ENCODE measurements at regions of chr12 and their contacts with region 1.

Region 1: DNA sequence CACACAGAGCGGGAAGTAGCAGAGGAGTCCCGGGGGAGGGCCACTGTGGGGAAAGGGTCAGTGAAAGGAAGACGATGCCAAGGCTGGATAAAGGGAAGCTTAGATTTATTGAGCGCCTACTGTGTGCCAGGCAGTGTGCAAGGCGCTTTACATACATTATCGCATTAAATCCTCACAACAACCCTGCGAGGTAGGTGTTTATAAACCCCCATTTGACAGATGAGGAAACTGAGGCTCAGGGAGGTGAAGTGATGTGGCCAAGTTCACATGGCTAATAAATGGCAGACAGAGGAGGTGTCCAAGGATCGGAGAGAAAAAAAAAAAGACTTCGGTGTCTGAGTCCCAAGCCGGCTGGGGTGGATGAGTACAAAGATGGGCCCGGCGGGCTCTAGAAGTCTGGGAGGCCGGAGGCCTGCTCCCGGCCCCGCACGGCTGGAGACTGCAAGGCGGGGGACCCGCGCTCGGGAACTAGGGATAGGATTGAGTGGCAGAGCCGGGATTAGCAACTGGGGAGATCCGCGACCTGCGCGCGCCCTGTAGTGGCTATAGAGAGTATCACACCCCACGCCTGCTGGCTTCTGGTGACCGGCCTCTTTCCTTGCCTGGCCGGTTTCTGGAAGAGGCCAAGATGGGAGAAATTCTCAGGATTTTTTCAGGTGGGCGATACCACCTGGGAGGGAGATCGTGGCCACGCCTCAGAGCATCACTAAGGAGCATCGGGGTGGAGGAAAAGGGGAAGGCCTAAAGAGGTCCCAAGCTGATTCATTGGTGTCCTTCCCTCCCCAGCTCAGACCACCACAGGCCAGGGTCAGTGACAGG is 3.9 kb downstream of the DDN start:
- DNase-seq: peak; percentile 93
- ATAC-seq: peak; percentile 69
- H3K4me3 Mint-ChIP-seq: peak overlapping the region; percentile 46
- H3K27ac Mint-ChIP-seq: no peak overlapping the region
- H3K4me1 Mint-ChIP-seq: peaks cover 24% of the 10 kb centered on the region
- H3K27me3 Mint-ChIP-seq: peaks cover 76% of the 10 kb centered on the region
- CTCF ChIP-seq: peak; percentile 58

Region 2: DNA sequence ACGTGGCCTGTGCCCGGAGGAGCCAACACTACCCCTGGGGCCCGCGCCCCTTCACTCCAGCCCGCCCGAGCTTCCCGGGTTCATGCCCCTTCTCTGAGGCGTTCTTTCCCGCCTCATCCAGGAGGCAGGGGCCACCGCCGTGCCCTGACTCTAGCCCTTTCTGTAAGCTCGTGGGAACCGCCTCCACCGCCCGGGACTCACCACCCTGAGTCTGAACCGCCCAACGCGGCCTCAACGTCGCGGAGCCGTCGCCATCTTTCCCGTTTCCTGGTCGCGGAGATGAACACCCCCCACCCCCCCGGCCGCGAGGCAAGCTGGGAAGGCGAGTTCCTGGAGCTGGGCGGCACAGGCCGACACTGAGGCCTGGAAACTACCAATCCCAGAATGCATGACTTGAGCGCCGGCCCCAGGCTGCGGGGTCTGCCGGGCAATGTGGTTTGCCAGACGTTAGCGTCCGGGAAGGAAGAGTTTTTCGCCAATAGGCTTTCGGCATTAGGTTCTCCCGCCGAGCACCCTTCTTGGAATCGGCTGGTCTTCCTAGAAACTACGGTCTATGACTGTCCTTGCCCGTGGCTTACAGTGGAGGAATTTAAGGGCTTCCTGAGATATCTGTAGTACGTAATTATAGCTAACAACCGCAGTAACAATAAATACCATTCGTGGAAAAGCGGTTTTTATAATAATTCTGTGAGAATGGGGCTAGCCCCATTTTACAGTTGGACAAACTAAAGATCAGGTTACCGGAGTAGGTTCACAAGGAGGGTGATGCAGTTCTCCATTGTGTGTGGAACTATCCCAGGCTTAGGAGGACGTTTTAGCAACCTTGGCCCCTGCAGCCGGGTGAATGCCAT is 143.2 kb before region 1 on chr12 and contains the start of gene DDX23:
- CTCF ChIA-PET with region 1: interaction called, 19 read pairs
- POLR2A ChIA-PET with region 1: no interaction called
- DNase-seq: peak; percentile 93
- ATAC-seq: peak; percentile 99
- H3K4me3 Mint-ChIP-seq: peak within 1 kb of the TSS; percentile 94
- H3K27ac Mint-ChIP-seq: peak within 1 kb of the TSS; percentile 95
- H3K4me1 Mint-ChIP-seq: peaks cover 20% of the 10 kb centered on the region
- H3K27me3 Mint-ChIP-seq: no peaks in the 10 kb centered on the region
- CTCF ChIP-seq: no peak
- total RNA-seq, gene DDX23: 91.1 to 107 TPM (median 93.4 TPM) in 3 replicates

Region 3: DNA sequence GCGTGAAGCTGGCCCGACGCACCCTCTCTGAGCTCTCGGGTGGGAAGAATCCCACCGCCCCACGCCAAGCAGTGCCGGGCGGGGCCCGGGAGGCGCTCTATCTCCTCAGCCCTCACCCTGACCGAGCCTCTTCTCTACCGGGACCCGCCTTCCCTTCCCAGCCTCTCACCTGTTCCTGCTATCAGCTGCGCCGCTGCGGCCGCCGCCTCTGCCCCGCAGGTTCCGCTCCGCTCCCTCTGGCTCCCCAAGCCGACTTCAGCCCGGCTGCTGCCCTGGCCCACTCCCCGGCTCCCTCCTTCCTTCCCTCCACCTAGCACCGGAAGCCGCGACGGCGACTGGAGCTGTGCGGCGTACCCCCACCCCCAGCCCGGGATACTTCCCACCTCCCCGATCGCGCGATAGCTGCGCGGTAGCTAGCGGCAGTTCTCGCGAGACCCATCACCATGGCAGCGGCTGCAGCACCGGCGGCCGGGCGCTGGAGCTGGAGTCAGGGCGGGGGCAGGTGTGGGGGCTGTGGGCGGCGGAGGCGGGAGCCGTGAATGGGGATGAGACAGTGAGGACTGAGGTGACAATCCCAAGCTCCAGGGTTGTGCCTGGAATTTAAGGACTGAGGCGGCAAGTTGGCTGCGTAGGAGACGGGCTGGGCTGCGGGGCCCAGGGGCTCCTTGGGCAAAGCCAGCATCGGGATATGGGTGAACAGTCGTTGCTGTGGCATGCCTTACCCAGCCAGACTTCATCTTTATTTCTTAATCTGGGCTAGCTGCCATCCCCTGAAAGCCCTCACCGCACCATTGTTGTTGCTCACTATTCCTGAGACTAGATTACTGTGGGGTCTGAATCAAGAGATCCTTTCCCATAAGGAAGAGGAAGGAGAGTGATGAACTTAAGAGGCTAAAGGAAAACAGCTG is 37.9 kb before region 1 on chr12 and contains the start of gene ARF3:
- CTCF ChIA-PET with region 1: interaction called, 21 read pairs
- POLR2A ChIA-PET with region 1: interaction called, 5 read pairs
- DNase-seq: peak; percentile 98
- ATAC-seq: peak; percentile 89
- H3K4me3 Mint-ChIP-seq: peak within 1 kb of the TSS; percentile 95
- H3K27ac Mint-ChIP-seq: peak within 1 kb of the TSS; percentile 97
- H3K4me1 Mint-ChIP-seq: peaks cover 31% of the 10 kb centered on the region
- H3K27me3 Mint-ChIP-seq: peaks cover 7% of the 10 kb centered on the region; the same call in 1 of the 2 replicates
- CTCF ChIP-seq: no peak
- total RNA-seq, gene ARF3: 238 to 256 TPM (median 248 TPM) in 3 replicates

Region 4: DNA sequence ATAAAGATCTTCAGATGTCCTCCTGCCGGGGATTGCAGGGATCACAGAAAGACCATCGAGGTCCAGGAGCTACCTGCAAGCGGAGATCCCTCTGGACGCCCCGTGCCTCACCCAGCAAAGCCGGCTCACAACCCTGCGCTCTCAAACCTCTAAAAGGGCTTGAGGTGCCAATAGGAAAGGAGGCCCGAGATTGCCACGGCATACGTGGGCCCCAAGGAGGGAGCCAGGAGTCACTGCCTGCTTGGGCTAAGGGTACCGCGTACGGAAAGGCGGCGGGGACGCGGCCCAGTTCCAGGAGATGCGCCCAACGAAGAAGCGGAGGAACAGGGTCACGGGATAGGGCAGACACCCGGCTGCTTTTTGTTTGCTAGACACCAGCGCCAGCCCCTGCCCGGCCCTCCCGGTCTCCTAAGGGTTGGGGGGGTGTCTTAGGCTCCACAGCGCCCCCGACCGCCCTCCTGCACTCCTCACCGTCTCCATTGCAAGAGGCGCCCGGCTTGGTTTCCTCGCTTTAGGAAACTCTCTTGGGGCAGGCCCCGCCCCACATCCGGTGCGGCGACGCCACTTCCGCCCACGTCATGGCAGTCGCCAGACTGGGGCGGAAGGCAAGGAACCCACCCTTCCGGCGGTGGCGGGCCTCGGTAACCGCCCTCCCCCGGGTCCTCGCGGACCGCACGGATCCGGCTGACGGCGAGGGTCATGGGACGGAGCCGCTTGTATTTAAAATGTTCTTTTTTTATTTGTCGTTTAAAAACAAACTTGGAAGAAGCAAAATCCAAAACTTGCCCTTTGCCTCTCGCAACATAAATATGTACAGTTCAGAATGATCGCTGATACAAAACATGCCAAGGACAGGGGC is 23.2 kb after region 1 on chr12 and contains the start of gene PRKAG1:
- CTCF ChIA-PET with region 1: interaction called, 98 read pairs
- POLR2A ChIA-PET with region 1: interaction called, 3 read pairs
- DNase-seq: peak; percentile 97
- ATAC-seq: peak; percentile 94
- H3K4me3 Mint-ChIP-seq: peak within 1 kb of the TSS; percentile 91
- H3K27ac Mint-ChIP-seq: peak within 1 kb of the TSS; percentile 99
- H3K4me1 Mint-ChIP-seq: peaks cover 16% of the 10 kb centered on the region
- H3K27me3 Mint-ChIP-seq: peaks cover 6% of the 10 kb centered on the region
- CTCF ChIP-seq: no peak
- total RNA-seq, gene PRKAG1: 37.9 to 41.6 TPM (median 38.0 TPM) in 3 replicates

Region 5: DNA sequence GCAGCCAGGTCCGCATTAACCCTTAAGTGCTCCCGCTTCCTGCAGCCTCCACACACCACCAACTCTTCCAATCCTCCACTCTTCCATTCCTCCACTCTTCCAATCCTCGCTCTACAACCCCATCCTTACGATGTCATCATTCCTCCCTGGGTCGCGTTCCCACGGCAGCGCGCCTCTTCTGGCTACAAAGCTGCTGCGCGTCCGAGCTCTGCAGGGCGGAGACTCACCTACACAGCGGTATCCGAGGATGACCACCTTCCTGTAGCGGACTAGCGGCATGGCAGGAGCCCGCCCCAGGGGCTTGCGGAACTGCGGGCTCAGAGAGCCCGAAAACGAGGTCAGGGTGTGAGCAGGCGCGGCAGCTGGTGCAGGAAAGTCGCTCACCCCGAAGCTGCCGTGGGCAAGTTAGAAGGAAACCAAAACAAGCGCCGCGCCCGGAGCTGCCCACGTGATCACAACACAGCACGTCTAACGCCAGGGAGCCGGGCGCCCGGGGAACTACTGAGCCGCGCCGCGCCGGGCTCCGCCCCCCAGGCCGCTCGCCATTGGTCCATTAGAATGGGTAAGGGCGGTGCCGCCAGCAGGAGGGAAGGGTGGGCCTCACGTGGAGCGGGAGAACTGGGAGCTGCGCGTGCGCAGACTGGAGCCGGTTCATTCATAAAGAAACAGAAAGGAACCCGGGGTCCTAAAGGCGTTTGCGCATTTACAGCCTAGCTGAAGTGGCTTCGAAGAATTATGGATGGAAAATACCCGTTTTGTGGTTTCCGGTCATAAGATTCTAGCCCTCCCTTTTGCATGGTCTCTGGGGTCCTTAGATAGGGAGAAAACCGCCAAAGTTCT is 74.5 kb after region 1 on chr12 and contains the start of gene RHEBL1:
- CTCF ChIA-PET with region 1: interaction called, 21 read pairs
- POLR2A ChIA-PET with region 1: no interaction called
- DNase-seq: peak; percentile 95
- ATAC-seq: peak; percentile 96
- H3K4me3 Mint-ChIP-seq: peak within 1 kb of the TSS; percentile 99
- H3K27ac Mint-ChIP-seq: peak within 1 kb of the TSS; percentile 7; the same call in 1 of the 2 replicates
- H3K4me1 Mint-ChIP-seq: peaks cover 15% of the 10 kb centered on the region
- H3K27me3 Mint-ChIP-seq: peaks cover 20% of the 10 kb centered on the region
- CTCF ChIP-seq: no peak
- total RNA-seq, gene RHEBL1: 6.4 to 9.0 TPM (median 6.9 TPM) in 3 replicates

Region 6: GRCh38 chr12:49110464-49111155 is 115.3 kb after region 1 on chr12 and contains the start of gene LMBR1L:
- CTCF ChIA-PET with region 1: interaction called, 10 read pairs
- POLR2A ChIA-PET with region 1: no interaction called
- DNase-seq: peak; percentile 97
- ATAC-seq: peak; percentile 96
- H3K4me3 Mint-ChIP-seq: peak within 1 kb of the TSS; percentile 96
- H3K27ac Mint-ChIP-seq: peak within 1 kb of the TSS; percentile 98
- H3K4me1 Mint-ChIP-seq: peaks cover 29% of the 10 kb centered on the region
- H3K27me3 Mint-ChIP-seq: peaks cover 4% of the 10 kb centered on the region
- CTCF ChIP-seq: no peak
- total RNA-seq, gene LMBR1L: 52.8 to 78.2 TPM (median 53.1 TPM) in 3 replicates

Measured in WTC11 (cell line).